Left ventricle myocardium superior (tissue), 1 donor: ENCODE measurements at regions of chr14 and their contacts with region 1.

Region 1: GRCh38 chr14:64715628-64716412 is 11.6 kb downstream of the PLEKHG3 start:
- DNase-seq: peak; percentile 51
- ATAC-seq: peak; percentile 35

Region 2: GRCh38 chr14:64758691-64759584 is 43.1 kb after region 1 on chr14:
- intact Hi-C with region 1: loop called (anchors 2 kb)
- DNase-seq: peak; percentile 69
- ATAC-seq: peak; percentile 59